ENCODE measurements at regions of chr3 and their contacts with region 1.

Region 1: DNA sequence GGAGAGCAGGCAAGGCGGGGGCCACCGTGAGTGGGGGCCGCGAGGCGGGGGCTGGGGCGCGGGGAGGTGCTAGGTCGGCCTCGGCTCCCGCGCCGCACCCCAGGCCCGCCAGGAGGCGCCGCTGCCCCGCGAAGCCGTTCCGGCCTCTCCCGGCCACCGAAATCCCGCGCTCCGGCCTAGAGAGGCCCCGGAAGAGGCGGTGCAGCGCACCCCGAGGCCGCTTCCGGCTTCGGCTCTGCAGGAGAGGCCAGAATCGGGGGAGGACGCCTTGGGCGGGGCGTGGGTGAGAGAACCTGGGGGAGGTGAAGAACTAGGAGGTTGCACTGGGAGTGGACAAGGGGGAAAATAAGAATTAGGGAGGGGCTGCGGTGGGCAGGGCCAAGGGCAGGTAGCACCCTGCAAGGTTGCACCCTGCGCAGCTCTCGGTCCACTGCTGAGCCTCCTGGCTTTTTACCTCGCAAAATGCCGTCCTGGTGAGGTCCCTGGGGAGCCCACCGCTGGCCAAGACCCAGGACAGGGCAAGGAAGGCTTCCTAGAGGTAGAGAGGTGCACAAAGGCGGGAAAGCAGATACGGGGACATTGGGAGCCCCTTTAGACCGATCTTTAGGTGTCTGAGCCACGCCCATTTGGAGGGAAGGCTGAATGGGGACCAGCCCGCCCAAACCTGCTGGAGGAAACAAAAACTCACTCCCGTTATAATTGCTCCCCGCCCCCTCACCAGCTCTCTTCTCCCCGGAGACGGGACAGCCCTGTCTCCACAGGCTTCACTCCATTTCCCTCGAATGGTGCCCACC is 8.4 kb upstream of the GNAI2 start:
- DNase-seq: peak; percentile 76 to 95 (median 91)
- ATAC-seq: peak; percentile 81
- H3K4me3 ChIP-seq: peak overlapping the region; percentile 69 to 78
- H3K4me3 Mint-ChIP-seq: peak overlapping the region; percentile 91
- H3K27ac ChIP-seq: peak overlapping the region; percentile 56 to 66
- H3K27ac Mint-ChIP-seq: peak overlapping the region; percentile 91
- H3K4me1 ChIP-seq: peaks cover 17% of the 10 kb centered on the region
- H3K4me1 Mint-ChIP-seq: peaks cover 22% of the 10 kb centered on the region
- H3K27me3 ChIP-seq: no peaks in the 10 kb centered on the region
- H3K27me3 Mint-ChIP-seq: no peaks in the 10 kb centered on the region
- CTCF ChIP-seq: peak; percentile 73

Region 2: GRCh38 chr3:50121416-50122032 is 106.1 kb before region 1 on chr3:
- CTCF ChIA-PET with region 1: interaction called, 23 read pairs
- POLR2A ChIA-PET with region 1: no interaction called
- intact Hi-C with region 1: loop called in 1 of 2 experiments (anchors 1 kb)
- DNase-seq: peak; percentile 50 to 84 (median 75)
- ATAC-seq: peak; percentile 88
- H3K4me3 ChIP-seq: no peak overlapping the region
- H3K4me3 Mint-ChIP-seq: no peak overlapping the region
- H3K27ac ChIP-seq: no peak overlapping the region
- H3K27ac Mint-ChIP-seq: no peak overlapping the region
- H3K4me1 ChIP-seq: no peaks in the 10 kb centered on the region
- H3K4me1 Mint-ChIP-seq: no peaks in the 10 kb centered on the region
- H3K27me3 ChIP-seq: no peaks in the 10 kb centered on the region
- H3K27me3 Mint-ChIP-seq: no peaks in the 10 kb centered on the region
- CTCF ChIP-seq: peak; percentile 86

Region 3: GRCh38 chr3:50146316-50146901 is 81.2 kb before region 1 on chr3:
- CTCF ChIA-PET with region 1: no interaction called
- POLR2A ChIA-PET with region 1: no interaction called
- intact Hi-C with region 1: no loop called
- DNase-seq: no peak
- ATAC-seq: no peak
- H3K4me3 ChIP-seq: no peak overlapping the region
- H3K4me3 Mint-ChIP-seq: no peak overlapping the region
- H3K27ac ChIP-seq: no peak overlapping the region
- H3K27ac Mint-ChIP-seq: no peak overlapping the region
- H3K4me1 ChIP-seq: no peaks in the 10 kb centered on the region
- H3K4me1 Mint-ChIP-seq: no peaks in the 10 kb centered on the region
- H3K27me3 ChIP-seq: no peaks in the 10 kb centered on the region
- H3K27me3 Mint-ChIP-seq: peaks cover 4% of the 10 kb centered on the region
- CTCF ChIP-seq: no peak

Region 4: GRCh38 chr3:50245831-50246516 is 18.4 kb after region 1 on chr3:
- CTCF ChIA-PET with region 1: interaction called, 257 read pairs
- POLR2A ChIA-PET with region 1: interaction called, 23 read pairs
- intact Hi-C with region 1: loop called (anchors 1 kb)
- DNase-seq: peak; percentile 90 to 99 (median 95)
- ATAC-seq: peak; percentile 81
- H3K4me3 ChIP-seq: peak overlapping the region; percentile 40 to 55
- H3K4me3 Mint-ChIP-seq: peak overlapping the region; percentile 75
- H3K27ac ChIP-seq: peak overlapping the region; percentile 32 to 88
- H3K27ac Mint-ChIP-seq: peak overlapping the region; percentile 94
- H3K4me1 ChIP-seq: peaks cover 87% of the 10 kb centered on the region
- H3K4me1 Mint-ChIP-seq: peaks cover 76% of the 10 kb centered on the region
- H3K27me3 ChIP-seq: no peaks in the 10 kb centered on the region
- H3K27me3 Mint-ChIP-seq: no peaks in the 10 kb centered on the region
- CTCF ChIP-seq: peak; percentile 80

Region 5: DNA sequence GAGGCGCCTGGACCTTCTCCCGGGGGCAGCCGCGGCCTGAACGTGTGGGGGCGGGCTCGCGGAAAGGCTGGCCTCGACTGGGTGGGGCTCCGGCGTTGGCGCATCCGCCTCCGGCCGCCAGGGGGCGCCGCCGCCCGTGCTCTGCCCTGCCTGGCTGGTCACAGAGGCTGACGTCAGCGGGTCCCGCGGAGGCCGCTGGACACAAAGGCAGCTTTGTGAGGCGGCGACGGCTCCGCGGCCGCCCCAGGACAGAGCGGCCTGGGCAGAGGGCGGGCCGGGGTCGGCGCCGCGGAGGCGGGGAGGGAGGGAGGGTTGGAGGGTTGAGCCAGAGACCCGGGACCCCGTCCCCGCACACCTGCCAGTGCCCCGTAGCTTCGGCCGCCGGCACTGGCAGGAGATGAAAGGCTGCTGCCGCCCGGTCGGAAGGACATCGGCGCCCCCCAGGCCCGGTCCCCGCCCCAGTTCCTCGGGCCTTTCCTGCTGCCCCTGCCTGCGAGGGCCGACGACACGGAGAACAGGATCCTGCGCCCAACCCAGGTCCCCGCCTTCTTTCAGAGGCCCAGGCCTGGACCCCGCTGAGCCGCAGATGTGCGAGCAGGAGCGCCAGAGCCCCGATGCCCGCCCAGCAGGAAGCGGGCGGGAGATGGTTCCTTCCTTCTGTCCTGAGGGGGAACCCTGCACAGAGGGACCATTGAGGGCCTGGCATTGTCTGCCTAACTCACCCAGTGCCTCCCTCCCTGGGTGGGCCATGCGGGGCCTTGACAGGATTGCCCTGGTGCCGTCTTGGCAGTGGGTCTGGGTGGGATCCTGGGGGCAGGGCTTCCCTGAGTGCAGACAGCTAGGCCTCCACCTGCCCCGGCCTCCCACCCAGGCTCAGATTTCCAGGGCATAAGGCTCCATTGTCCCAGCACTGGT is 32.7 kb after region 1 on chr3:
- CTCF ChIA-PET with region 1: interaction called, 26 read pairs
- POLR2A ChIA-PET with region 1: interaction called, 4 read pairs
- intact Hi-C with region 1: loop called (anchors 1 kb)
- DNase-seq: peak; percentile 55 to 90 (median 81)
- ATAC-seq: peak; percentile 92
- H3K4me3 ChIP-seq: peak overlapping the region; percentile 49 to 53
- H3K4me3 Mint-ChIP-seq: peak overlapping the region; percentile 75
- H3K27ac ChIP-seq: peak overlapping the region; percentile 62 to 68
- H3K27ac Mint-ChIP-seq: peak overlapping the region; percentile 66
- H3K4me1 ChIP-seq: peaks cover 6% of the 10 kb centered on the region
- H3K4me1 Mint-ChIP-seq: peaks cover 7% of the 10 kb centered on the region
- H3K27me3 ChIP-seq: no peaks in the 10 kb centered on the region
- H3K27me3 Mint-ChIP-seq: no peaks in the 10 kb centered on the region
- CTCF ChIP-seq: peak; percentile 92

Region 6: DNA sequence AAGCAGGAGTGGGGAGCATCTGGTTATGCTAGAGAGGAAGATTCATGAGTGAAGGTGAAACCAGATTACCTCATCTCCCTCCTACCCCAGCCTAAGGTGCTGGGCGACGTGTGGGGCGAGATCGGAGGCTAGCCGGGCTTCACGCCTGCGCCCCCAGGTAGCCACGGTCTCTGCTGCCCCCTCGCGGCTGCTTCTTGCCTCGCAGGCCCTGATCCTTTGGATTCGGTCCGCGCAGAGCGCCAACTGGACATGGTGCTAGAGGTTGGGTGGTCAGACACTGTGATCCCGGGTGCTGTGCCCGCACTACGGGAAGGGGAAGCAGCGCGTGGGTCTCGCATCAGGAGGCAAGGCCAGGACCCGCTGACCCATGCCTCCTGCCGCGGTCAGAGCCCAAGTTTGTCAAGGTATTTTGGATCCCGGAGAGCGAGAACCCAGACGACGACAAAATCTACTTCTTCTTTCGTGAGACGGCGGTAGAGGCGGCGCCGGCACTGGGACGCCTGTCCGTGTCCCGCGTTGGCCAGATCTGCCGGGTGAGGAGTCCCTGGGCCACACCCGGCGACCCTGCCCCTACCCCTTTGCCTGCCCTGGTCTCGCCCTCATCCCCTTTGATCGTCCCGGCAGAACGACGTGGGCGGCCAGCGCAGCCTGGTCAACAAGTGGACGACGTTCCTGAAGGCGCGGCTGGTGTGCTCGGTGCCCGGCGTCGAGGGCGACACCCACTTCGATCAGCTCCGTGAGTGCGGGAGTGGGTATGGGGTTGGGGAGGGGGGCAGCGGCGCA is 45.5 kb after region 1 on chr3:
- CTCF ChIA-PET with region 1: interaction called, 31 read pairs
- POLR2A ChIA-PET with region 1: no interaction called
- intact Hi-C with region 1: loop called (anchors 1 kb)
- DNase-seq: peak; percentile 71 to 93 (median 88)
- ATAC-seq: peak; percentile 89
- H3K4me3 ChIP-seq: peak overlapping the region; percentile 8 to 17
- H3K4me3 Mint-ChIP-seq: peak overlapping the region; percentile 68
- H3K27ac ChIP-seq: no peak overlapping the region
- H3K27ac Mint-ChIP-seq: no peak overlapping the region
- H3K4me1 ChIP-seq: peaks cover 31% of the 10 kb centered on the region
- H3K4me1 Mint-ChIP-seq: peaks cover 25% of the 10 kb centered on the region
- H3K27me3 ChIP-seq: peaks cover 24 to 31% of the 10 kb centered on the region in 2 experiments
- H3K27me3 Mint-ChIP-seq: peaks cover 34% of the 10 kb centered on the region
- CTCF ChIP-seq: peak; percentile 93

Region 7: DNA sequence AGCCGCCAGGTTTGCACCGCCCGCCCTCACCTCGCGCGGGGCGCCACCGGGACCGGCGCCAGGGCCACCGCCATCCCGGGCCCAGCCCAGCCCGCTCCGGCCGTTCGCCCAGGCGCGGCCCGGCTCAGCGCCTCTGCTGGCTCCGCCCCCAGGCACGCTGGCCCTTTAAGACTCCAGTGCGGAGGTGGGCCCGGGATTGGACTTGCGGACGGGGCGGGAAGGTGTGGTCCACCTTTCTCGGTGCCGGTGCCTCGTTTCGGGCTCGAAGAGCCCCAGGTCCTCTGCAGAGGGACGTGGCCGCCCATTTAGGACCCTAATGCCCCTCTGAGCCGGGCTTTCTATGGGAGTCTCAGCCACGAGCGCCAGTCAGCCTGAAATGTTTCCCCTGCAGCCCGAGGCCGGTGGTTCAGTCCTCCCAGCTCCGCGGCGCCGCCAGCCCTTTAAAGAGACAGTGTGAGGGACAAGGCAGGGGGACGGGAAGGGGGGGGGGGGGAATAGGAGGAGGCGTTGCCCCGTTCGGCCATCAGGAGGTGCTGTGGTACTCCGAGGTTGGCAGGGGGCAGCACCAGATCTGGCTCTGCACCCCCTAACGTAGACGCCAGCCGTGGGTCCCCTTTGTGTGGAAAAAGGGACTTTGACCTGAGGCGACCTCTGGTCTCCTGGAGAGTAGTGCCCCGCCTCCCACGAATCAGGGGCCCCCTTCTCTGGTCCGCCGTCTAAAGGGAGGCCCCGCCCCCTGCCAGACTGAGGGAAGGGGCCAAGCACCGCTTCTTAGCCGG is 93.9 kb after region 1 on chr3:
- CTCF ChIA-PET with region 1: interaction called, 6 read pairs
- POLR2A ChIA-PET with region 1: no interaction called
- intact Hi-C with region 1: loop called in 1 of 2 experiments (anchors 2 kb)
- DNase-seq: peak; percentile 65 to 89 (median 82)
- ATAC-seq: peak; percentile 69
- H3K4me3 ChIP-seq: peak overlapping the region; percentile 71 to 96
- H3K4me3 Mint-ChIP-seq: peak overlapping the region; percentile 85
- H3K27ac ChIP-seq: peak overlapping the region; percentile 77 to 94
- H3K27ac Mint-ChIP-seq: peak overlapping the region; percentile 92
- H3K4me1 ChIP-seq: peaks cover 30% of the 10 kb centered on the region
- H3K4me1 Mint-ChIP-seq: peaks cover 41% of the 10 kb centered on the region
- H3K27me3 ChIP-seq: no peaks in the 10 kb centered on the region
- H3K27me3 Mint-ChIP-seq: no peaks in the 10 kb centered on the region
- CTCF ChIP-seq: peak; percentile 47